PC-9 (cell line): ENCODE measurements at regions of chr16 and their contacts with region 1.

Region 1: GRCh38 chr16:25151996-25152395 is 40.5 kb downstream of the LCMT1 start:
- DNase-seq: peak; percentile 86 to 87
- H3K4me3 ChIP-seq: no peak overlapping the region
- H3K27ac ChIP-seq: peak overlapping the region; percentile 80
- H3K4me1 ChIP-seq: peaks cover 29% of the 10 kb centered on the region
- H3K27me3 ChIP-seq: no peaks in the 10 kb centered on the region
- CTCF ChIP-seq: no peak

Region 2: GRCh38 chr16:24525970-24526559 is 625.9 kb before region 1 on chr16:
- CTCF ChIA-PET with region 1: no interaction called
- POLR2A ChIA-PET with region 1: interaction called, 18 read pairs
- intact Hi-C with region 1: no loop called
- DNase-seq: peak; percentile 39 to 85
- H3K4me3 ChIP-seq: no peak overlapping the region
- H3K27ac ChIP-seq: no peak overlapping the region
- H3K4me1 ChIP-seq: peaks cover 14% of the 10 kb centered on the region
- H3K27me3 ChIP-seq: no peaks in the 10 kb centered on the region
- CTCF ChIP-seq: no peak

Region 3: GRCh38 chr16:25079637-25080378 is 72.2 kb before region 1 on chr16:
- CTCF ChIA-PET with region 1: no interaction called
- POLR2A ChIA-PET with region 1: no interaction called
- intact Hi-C with region 1: no loop called
- DNase-seq: no peak
- H3K4me3 ChIP-seq: no peak overlapping the region
- H3K27ac ChIP-seq: no peak overlapping the region
- H3K4me1 ChIP-seq: no peaks in the 10 kb centered on the region
- H3K27me3 ChIP-seq: peaks cover 9% of the 10 kb centered on the region
- CTCF ChIP-seq: no peak

Region 4: GRCh38 chr16:25111403-25112166 is 40.4 kb before region 1 on chr16 and contains the start of gene LCMT1:
- CTCF ChIA-PET with region 1: no interaction called
- POLR2A ChIA-PET with region 1: no interaction called
- intact Hi-C with region 1: loop called (anchors 1 kb)
- DNase-seq: peak; percentile 92 to 96
- H3K4me3 ChIP-seq: peak within 1 kb of the TSS; percentile 74
- H3K27ac ChIP-seq: peak within 1 kb of the TSS; percentile 82
- H3K4me1 ChIP-seq: peaks cover 29% of the 10 kb centered on the region
- H3K27me3 ChIP-seq: no peaks in the 10 kb centered on the region
- CTCF ChIP-seq: no peak
- total RNA-seq, gene LCMT1: 67.1 and 113 TPM in 2 replicates

Region 5: DNA sequence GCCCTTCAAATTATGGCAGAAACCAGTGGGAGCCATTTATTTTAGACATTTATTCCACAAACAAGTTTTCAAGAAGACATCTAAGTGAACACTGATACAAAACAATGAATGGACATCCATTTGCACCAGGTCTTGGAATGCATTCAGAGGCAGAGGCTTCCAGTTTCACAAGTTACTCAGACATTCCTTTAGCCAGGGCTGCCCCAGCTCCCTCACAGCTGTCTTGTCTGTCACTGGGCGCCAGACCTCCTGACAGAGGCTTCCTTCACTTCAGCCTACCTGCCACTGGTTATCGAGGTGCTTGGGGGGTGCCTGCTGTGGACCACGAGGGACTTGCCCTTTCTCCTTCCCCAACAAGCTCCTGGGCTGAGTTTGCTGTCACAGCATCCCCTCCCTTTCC is 84.0 kb after region 1 on chr16:
- CTCF ChIA-PET with region 1: interaction called, 10 read pairs
- POLR2A ChIA-PET with region 1: no interaction called
- intact Hi-C with region 1: no loop called
- DNase-seq: no peak
- H3K4me3 ChIP-seq: no peak overlapping the region
- H3K27ac ChIP-seq: no peak overlapping the region
- H3K4me1 ChIP-seq: no peaks in the 10 kb centered on the region
- H3K27me3 ChIP-seq: peaks cover 3% of the 10 kb centered on the region; the same call in 1 of the 2 replicates
- CTCF ChIP-seq: no peak

Region 6: GRCh38 chr16:25257504-25257955 is 105.5 kb after region 1 on chr16 and contains the start of gene ZKSCAN2:
- CTCF ChIA-PET with region 1: no interaction called
- POLR2A ChIA-PET with region 1: interaction called, 6 read pairs
- intact Hi-C with region 1: loop called (anchors 5 kb)
- DNase-seq: peak; percentile 72 to 94
- H3K4me3 ChIP-seq: peak within 1 kb of the TSS; percentile 89
- H3K27ac ChIP-seq: peak within 1 kb of the TSS; percentile 96
- H3K4me1 ChIP-seq: peaks cover 21% of the 10 kb centered on the region
- H3K27me3 ChIP-seq: no peaks in the 10 kb centered on the region
- CTCF ChIP-seq: no peak
- total RNA-seq, gene ZKSCAN2: 4.5 and 6.5 TPM in 2 replicates